Body of pancreas (tissue), 4 donors: ENCODE measurements at regions of chr1 and their contacts with region 1.

Region 1: GRCh38 chr1:182446033-182446669 is 3.8 kb upstream of the RGSL1 start:
- DNase-seq: peak; percentile 22 to 31 (median 26)
- ATAC-seq: peak; percentile 78
- H3K4me3 ChIP-seq: no peak overlapping the region
- H3K27ac ChIP-seq: no peak overlapping the region
- H3K4me1 ChIP-seq: peaks cover 10% of the 10 kb centered on the region
- H3K27me3 ChIP-seq: no peaks in the 10 kb centered on the region
- CTCF ChIP-seq: peak in 6 of 7 experiments; percentile 46 to 63 (median 61)
- POLR2A ChIP-seq: no peak

Region 2: DNA sequence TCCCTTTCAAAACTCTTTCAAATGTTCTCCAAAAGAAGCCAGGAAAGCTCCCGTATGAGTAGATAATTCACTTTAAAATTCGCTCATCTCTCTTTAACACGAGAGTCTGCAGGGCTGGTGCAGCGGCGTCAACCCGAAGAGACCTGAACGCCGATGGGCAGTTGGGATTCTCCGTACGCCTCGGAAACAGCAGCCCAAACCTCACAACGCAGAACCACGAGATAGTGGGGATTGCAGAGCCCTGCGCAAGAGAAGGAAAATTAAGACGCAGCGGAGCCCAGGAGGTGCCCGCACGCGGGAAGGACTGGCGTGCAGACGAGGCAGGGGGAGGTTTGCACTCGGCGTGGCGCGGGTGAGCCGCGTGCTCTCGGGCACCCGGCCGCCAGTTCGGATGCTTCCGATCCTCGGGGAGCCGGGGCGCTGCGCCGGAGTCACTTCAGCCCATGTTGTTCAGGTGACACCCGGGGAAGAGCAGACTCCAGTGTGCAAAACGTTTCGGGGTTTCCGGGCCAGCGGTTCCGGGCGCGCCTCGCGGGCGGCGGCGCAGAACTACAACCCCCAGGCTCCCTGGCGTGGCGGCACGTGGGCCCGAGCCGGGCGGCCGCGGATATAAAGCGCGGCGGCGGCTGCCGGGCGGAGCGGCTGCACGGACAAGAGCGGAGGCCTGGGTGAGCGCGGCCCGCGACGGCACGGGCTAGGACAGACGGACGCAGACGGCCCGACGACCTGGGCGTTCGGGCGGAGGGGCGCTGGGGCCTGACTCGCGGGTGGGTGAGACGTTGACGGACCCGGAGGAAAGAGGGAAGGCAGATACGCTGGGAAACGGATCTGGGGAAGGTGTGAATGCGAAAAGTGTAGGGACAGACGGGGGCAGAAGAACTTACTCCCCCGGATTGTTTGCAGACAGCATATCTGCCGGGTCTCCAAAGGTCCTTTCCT is 343.3 kb after region 1 on chr1 and contains the start of gene NPL:
- intact Hi-C with region 1: loop called (anchors 10 kb)
- DNase-seq: peak; percentile 80 to 85 (median 83)
- ATAC-seq: peak; percentile 96
- H3K4me3 ChIP-seq: peak within 1 kb of the TSS; percentile 28 to 51
- H3K27ac ChIP-seq: peak within 1 kb of the TSS in 2 of 4 donors; percentile 36 to 43
- H3K4me1 ChIP-seq: peaks cover 14% of the 10 kb centered on the region
- H3K27me3 ChIP-seq: no peaks in the 10 kb centered on the region
- CTCF ChIP-seq: peak in 1 of 7 experiments; percentile 0
- POLR2A ChIP-seq: peak; percentile 86 to 93 (median 88)
- total RNA-seq, gene NPL: 0.99 to 2.6 TPM